ENCODE measurements at regions of chr6 and their contacts with region 1.

Region 1: DNA sequence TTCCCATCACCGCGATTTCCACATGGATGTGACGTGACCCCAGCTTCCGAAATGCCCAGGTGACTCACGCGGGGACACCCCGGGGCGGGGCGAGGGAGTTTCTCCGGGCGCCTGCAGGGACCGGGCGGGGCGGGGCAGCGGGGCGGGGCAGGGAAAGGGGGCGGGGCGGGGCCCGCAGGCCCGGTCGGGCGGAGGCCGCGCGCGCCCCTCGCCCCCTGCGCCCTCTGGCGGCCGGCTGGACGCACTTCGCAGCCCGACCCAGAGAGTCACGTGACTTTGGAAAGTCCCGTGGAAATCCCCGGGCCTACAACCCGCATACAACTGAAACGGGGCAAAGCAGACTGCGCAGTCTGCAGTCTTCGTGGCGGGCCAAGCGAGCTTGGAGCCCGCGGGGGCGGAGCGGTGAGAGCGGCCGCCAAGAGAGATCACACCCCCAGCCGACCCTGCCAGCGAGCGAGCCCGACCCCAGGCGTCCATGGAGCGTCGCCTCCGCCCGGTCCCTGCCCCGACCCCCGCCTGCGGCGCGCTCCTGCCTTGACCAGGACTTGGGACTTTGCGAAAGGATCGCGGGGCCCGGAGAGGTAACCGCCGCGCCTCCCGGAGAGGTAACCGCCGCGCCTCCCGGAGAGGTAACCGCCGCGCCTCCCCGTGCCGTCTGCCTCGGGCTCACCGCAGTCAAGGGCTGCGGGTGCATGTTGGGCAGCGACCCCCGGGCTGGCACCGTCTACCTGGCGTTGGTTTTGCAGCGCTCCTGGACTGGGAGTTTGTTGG is at the start of gene TNFAIP3:
- DNase-seq: peak; percentile 95
- ATAC-seq: peak; percentile 94
- H3K4me3 ChIP-seq: peak within 1 kb of the TSS; percentile 88
- H3K27ac ChIP-seq: peak within 1 kb of the TSS; percentile 70
- H3K4me1 ChIP-seq: peaks cover 12% of the 10 kb centered on the region
- H3K27me3 ChIP-seq: no peaks in the 10 kb centered on the region
- CTCF ChIP-seq: peak; percentile 89
- POLR2A ChIP-seq: peak; percentile 92
- RAD21 ChIP-seq: peak; percentile 75
- total RNA-seq, gene TNFAIP3: 4.4 and 5.0 TPM in 2 replicates

Region 2: DNA sequence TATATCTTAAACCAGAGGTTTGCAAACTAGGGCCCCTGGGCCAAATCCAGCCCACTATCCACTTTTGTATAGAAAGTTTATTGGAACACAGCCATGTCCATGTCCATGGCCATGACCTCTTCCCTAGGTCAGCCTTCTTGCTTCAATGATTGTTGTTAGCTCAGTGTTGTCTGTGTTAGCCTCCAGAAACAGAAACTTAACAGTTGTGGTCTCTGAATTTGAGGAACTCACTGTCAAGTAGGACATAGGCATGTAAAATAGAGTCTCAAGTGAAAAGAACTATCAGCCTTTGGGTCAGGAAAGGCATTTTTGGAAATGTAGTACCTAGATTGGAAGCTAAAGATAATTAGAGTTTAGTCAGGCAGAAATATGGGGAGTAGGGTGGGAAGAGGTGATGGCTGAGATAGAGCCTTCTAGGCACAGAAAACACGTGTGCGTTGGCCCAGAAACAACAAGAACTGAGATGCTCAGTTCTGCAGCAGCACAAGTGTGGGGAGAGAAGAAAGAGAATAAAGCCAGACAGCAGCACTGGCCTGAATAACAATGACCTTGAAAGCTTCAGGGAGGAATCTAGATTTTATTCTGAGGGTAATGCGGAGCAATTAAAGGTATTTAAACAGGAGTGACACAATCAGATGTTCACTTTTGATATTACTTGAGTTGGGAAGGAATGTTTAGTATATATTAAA is 285.9 kb before region 1 on chr6:
- CTCF ChIA-PET with region 1: no interaction called
- POLR2A ChIA-PET with region 1: no interaction called
- dilution Hi-C with region 1: no loop called
- in situ Hi-C with region 1: no loop called
- intact Hi-C with region 1: no loop called
- DNase-seq: no peak
- ATAC-seq: no peak
- H3K4me3 ChIP-seq: no peak overlapping the region
- H3K27ac ChIP-seq: no peak overlapping the region
- H3K4me1 ChIP-seq: no peaks in the 10 kb centered on the region
- H3K27me3 ChIP-seq: no peaks in the 10 kb centered on the region
- CTCF ChIP-seq: no peak
- POLR2A ChIP-seq: no peak
- RAD21 ChIP-seq: no peak

Region 3: GRCh38 chr6:137661601-137662000 is 205.5 kb before region 1 on chr6:
- CTCF ChIA-PET with region 1: no interaction called
- POLR2A ChIA-PET with region 1: no interaction called
- dilution Hi-C with region 1: no loop called
- in situ Hi-C with region 1: no loop called
- intact Hi-C with region 1: loop called (anchors 1 kb)
- DNase-seq: peak; percentile 26
- ATAC-seq: 0 out of 2 replicates have a peak, but pooled peaks have one; percentile 29
- H3K4me3 ChIP-seq: no peak overlapping the region
- H3K27ac ChIP-seq: no peak overlapping the region
- H3K4me1 ChIP-seq: no peaks in the 10 kb centered on the region
- H3K27me3 ChIP-seq: peaks cover 2% of the 10 kb centered on the region
- CTCF ChIP-seq: peak; percentile 49
- POLR2A ChIP-seq: no peak
- RAD21 ChIP-seq: peak; percentile 50

Region 4: GRCh38 chr6:137707590-137708360 is 159.3 kb before region 1 on chr6:
- CTCF ChIA-PET with region 1: interaction called, 5 read pairs
- POLR2A ChIA-PET with region 1: no interaction called
- dilution Hi-C with region 1: no loop called
- in situ Hi-C with region 1: loop called (anchors 5 kb)
- intact Hi-C with region 1: loop called (anchors 1 kb)
- DNase-seq: peak; percentile 86
- ATAC-seq: peak; percentile 78
- H3K4me3 ChIP-seq: no peak overlapping the region; the same call in 1 of the 2 replicates
- H3K27ac ChIP-seq: no peak overlapping the region
- H3K4me1 ChIP-seq: no peaks in the 10 kb centered on the region; the same call in 1 of the 2 replicates
- H3K27me3 ChIP-seq: no peaks in the 10 kb centered on the region
- CTCF ChIP-seq: peak; percentile 89
- POLR2A ChIP-seq: no peak
- RAD21 ChIP-seq: peak; percentile 89

Region 5: DNA sequence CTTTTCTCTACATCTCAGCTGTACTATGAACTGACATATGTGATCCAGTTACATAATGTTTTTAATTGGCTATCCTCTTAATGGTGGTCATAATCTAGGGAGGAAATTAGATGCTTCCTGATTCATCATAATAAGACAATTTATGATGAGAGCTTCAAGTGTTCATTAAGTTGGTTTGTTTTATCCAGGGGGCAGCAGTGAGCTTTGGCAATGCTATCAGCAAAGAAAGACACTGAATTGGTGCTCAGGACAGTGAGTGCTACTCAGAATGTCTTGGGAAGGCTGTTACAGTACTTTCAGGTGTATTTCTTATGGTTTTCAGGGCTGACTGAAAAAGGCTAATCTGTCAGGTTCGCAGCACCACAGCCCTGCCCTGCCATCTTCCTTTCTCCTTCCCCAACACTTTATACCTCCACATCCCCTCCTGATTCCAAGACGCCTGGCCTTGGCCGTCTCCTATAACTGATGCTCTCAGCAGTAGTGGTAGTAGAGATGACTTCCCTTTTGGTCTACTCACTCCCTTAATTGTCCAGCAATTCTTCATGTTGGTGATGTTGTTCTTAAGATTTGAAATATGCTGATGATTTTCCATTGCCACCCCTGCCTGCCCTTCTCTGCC is 67.0 kb before region 1 on chr6:
- CTCF ChIA-PET with region 1: interaction called, 6 read pairs
- POLR2A ChIA-PET with region 1: no interaction called
- dilution Hi-C with region 1: no loop called
- in situ Hi-C with region 1: no loop called
- intact Hi-C with region 1: loop called (anchors 2 kb)
- DNase-seq: peak; percentile 67
- ATAC-seq: peak; percentile 68
- H3K4me3 ChIP-seq: no peak overlapping the region
- H3K27ac ChIP-seq: no peak overlapping the region
- H3K4me1 ChIP-seq: no peaks in the 10 kb centered on the region; the same call in 1 of the 2 replicates
- H3K27me3 ChIP-seq: no peaks in the 10 kb centered on the region
- CTCF ChIP-seq: peak; percentile 59
- POLR2A ChIP-seq: no peak
- RAD21 ChIP-seq: peak; percentile 64

Region 6: DNA sequence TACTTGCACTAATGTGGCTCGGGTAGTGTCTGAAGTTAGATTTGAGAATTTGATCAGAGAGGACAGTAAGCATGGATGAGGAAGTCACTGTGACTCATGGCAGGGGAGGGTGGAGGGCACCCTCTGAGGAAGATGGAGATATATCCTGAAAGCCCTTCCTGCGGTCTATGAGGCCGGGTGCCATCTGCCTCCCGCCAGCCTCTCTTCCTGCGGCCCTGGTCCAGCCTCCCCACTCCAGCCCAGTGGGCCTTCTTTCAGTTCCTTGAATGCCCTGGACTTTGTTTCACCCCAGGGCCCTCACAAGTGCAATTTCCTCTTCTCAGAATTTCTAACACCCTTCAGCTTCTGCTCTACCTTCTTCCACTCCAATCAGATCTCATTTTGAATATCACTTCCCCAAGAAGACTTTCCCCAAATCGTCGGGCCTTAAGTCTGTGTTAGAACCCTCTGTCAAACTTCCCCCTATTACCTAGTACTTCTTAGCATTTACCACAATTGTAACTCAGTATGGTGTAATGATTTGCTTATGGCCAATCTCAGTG is 20.3 kb before region 1 on chr6:
- CTCF ChIA-PET with region 1: no interaction called
- POLR2A ChIA-PET with region 1: interaction called, 7 read pairs
- dilution Hi-C with region 1: no loop called
- in situ Hi-C with region 1: no loop called
- intact Hi-C with region 1: loop called (anchors 1 kb)
- DNase-seq: no peak
- ATAC-seq: no peak
- H3K4me3 ChIP-seq: no peak overlapping the region
- H3K27ac ChIP-seq: no peak overlapping the region
- H3K4me1 ChIP-seq: peaks cover 24% of the 10 kb centered on the region
- H3K27me3 ChIP-seq: no peaks in the 10 kb centered on the region
- CTCF ChIP-seq: no peak
- POLR2A ChIP-seq: no peak
- RAD21 ChIP-seq: no peak

Region 7: GRCh38 chr6:137944793-137945498 is 77.8 kb after region 1 on chr6:
- CTCF ChIA-PET with region 1: interaction called, 10 read pairs
- POLR2A ChIA-PET with region 1: no interaction called
- dilution Hi-C with region 1: no loop called
- in situ Hi-C with region 1: no loop called
- intact Hi-C with region 1: loop called (anchors 1 kb)
- DNase-seq: peak; percentile 52
- ATAC-seq: peak; percentile 93
- H3K4me3 ChIP-seq: no peak overlapping the region
- H3K27ac ChIP-seq: no peak overlapping the region
- H3K4me1 ChIP-seq: no peaks in the 10 kb centered on the region
- H3K27me3 ChIP-seq: peaks cover 6% of the 10 kb centered on the region; the same call in 1 of the 2 replicates
- CTCF ChIP-seq: peak; percentile 83
- POLR2A ChIP-seq: no peak
- RAD21 ChIP-seq: peak; percentile 82

Region 8: DNA sequence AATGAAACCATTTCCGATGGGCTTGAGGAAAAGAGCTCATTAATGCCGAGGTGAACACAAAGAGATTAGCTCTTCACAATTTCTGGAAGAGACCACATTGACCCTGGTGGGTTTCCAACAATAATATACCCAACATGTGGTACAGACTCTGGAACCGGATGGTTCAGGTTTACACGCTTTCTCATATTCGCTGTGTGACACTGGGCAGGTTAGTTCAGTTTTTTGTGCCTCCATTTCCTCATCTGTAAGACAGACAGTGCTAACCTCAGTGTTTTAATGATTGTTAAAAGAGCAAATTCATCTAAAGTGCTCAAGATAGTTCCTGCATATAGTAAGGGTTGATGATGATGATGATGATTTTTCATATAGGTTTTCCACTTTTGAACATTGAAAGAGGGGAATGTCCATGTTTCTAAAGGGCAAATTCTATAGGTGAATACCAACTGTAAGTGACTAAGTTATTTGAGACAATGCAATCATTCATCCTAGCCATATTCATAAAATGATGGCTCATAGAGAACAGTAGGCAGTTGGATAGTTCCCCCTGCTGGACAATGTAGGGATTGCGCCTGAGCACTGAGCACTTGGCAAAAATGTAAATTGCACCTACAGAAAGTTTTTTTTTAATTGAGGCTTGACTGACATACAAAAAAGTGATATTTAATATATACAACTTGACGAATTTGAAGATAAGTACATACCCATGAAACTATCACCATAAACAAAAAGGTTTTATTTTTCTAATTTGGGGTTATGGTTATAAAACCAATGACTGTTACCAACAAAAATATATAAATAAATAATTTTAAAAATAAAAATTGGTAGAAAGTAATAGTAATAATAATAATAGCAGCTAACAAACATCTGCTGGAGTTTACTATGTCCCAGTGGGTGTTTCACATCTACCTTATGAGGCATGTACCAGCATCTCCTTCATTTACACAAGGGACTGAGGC is 242.2 kb after region 1 on chr6:
- CTCF ChIA-PET with region 1: no interaction called
- POLR2A ChIA-PET with region 1: no interaction called
- dilution Hi-C with region 1: no loop called
- in situ Hi-C with region 1: loop called (anchors 10 kb)
- intact Hi-C with region 1: loop called (anchors 5 kb)
- DNase-seq: peak; percentile 70
- ATAC-seq: peak; percentile 53; the same call in 1 of the 2 replicates
- H3K4me3 ChIP-seq: no peak overlapping the region
- H3K27ac ChIP-seq: no peak overlapping the region
- H3K4me1 ChIP-seq: peaks cover 9% of the 10 kb centered on the region
- H3K27me3 ChIP-seq: peaks cover 13% of the 10 kb centered on the region
- CTCF ChIP-seq: peak; percentile 98
- POLR2A ChIP-seq: no peak
- RAD21 ChIP-seq: peak; percentile 95

Measured in IMR-90 (cell line).